Activated B cell treated with CpG ODN at 0.5 μM for 24 hours (primary cell): ENCODE measurements at regions of chr3 and their contacts with region 1.

Region 1: GRCh38 chr3:24963762-24964625 is 464.1 kb upstream of the RARB start:
- DNase-seq: no peak
- ATAC-seq: no peak
- H3K4me3 Mint-ChIP-seq: no peak overlapping the region
- H3K27ac Mint-ChIP-seq: no peak overlapping the region
- H3K4me1 Mint-ChIP-seq: no peaks in the 10 kb centered on the region
- H3K27me3 Mint-ChIP-seq: no peaks in the 10 kb centered on the region
- CTCF ChIP-seq: no peak

Region 2: GRCh38 chr3:24351779-24352469 is 612.1 kb before region 1 on chr3:
- CTCF ChIA-PET with region 1: no interaction called
- POLR2A ChIA-PET with region 1: no interaction called
- intact Hi-C with region 1: loop called (anchors 10 kb)
- DNase-seq: no peak
- ATAC-seq: no peak
- H3K4me3 Mint-ChIP-seq: no peak overlapping the region
- H3K27ac Mint-ChIP-seq: no peak overlapping the region
- H3K4me1 Mint-ChIP-seq: no peaks in the 10 kb centered on the region
- H3K27me3 Mint-ChIP-seq: peaks cover 3% of the 10 kb centered on the region
- CTCF ChIP-seq: no peak

Region 3: DNA sequence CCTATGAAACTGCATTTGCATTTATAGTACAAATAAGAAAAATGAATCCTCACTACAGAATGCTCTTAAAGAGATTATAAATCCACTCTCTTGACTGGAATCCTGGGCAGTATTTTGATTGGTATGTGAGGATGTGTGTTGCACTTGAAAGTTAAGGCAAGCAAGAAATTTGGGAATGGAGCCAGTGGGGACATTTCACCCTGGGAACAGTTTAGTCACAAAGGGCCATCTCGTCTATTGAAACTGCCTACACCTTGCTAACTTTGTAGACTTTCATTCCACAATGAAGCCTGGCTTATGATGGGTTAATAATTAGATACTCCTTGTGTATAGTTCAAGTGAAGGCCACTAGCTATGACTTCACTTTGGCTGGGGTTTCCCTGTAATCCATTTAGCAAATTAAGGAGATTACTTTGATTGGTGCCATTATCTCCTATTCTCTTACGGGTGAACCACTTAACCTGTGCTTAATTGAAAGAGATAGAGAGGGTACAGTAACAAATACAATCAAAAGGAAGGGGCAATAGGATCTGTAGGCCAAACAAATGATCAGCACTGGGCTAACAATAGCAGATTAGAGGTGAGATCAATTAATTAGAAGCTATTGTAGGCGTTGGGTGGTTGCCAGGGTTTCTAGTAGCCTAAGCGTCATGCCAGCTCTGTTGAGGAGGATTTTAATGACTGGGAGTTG is 317.2 kb after region 1 on chr3:
- CTCF ChIA-PET with region 1: no interaction called
- POLR2A ChIA-PET with region 1: no interaction called
- intact Hi-C with region 1: no loop called
- DNase-seq: no peak
- ATAC-seq: no peak
- H3K4me3 Mint-ChIP-seq: no peak overlapping the region
- H3K27ac Mint-ChIP-seq: no peak overlapping the region
- H3K4me1 Mint-ChIP-seq: no peaks in the 10 kb centered on the region
- H3K27me3 Mint-ChIP-seq: no peaks in the 10 kb centered on the region
- CTCF ChIP-seq: no peak